Ovary (tissue), 10 donors: ENCODE measurements at regions of chr1 and their contacts with region 1.

Region 1: GRCh38 chr1:156860113-156860627 is 495 bp upstream of the NTRK1 start:
- DNase-seq: peak in 3 of 5 donors; percentile 32 to 64 (median 56)
- H3K4me3 ChIP-seq: peak overlapping the region; percentile 21
- H3K27ac ChIP-seq: no peak overlapping the region
- H3K4me1 ChIP-seq: peaks cover 2% of the 10 kb centered on the region
- H3K27me3 ChIP-seq: peaks cover 9% of the 10 kb centered on the region
- CTCF ChIP-seq: peak; percentile 36 to 51 (median 39)
- EP300 ChIP-seq: no peak
- POLR2A ChIP-seq: no peak

Region 2: GRCh38 chr1:156342166-156342955 is 517.8 kb before region 1 on chr1:
- intact Hi-C with region 1: loop called in 1 of 4 experiments (anchors 5 kb)
- DNase-seq: no peak
- H3K4me3 ChIP-seq: no peak overlapping the region
- H3K27ac ChIP-seq: no peak overlapping the region
- H3K4me1 ChIP-seq: no peaks in the 10 kb centered on the region
- H3K27me3 ChIP-seq: no peaks in the 10 kb centered on the region
- CTCF ChIP-seq: no peak
- EP300 ChIP-seq: no peak
- POLR2A ChIP-seq: no peak

Region 3: DNA sequence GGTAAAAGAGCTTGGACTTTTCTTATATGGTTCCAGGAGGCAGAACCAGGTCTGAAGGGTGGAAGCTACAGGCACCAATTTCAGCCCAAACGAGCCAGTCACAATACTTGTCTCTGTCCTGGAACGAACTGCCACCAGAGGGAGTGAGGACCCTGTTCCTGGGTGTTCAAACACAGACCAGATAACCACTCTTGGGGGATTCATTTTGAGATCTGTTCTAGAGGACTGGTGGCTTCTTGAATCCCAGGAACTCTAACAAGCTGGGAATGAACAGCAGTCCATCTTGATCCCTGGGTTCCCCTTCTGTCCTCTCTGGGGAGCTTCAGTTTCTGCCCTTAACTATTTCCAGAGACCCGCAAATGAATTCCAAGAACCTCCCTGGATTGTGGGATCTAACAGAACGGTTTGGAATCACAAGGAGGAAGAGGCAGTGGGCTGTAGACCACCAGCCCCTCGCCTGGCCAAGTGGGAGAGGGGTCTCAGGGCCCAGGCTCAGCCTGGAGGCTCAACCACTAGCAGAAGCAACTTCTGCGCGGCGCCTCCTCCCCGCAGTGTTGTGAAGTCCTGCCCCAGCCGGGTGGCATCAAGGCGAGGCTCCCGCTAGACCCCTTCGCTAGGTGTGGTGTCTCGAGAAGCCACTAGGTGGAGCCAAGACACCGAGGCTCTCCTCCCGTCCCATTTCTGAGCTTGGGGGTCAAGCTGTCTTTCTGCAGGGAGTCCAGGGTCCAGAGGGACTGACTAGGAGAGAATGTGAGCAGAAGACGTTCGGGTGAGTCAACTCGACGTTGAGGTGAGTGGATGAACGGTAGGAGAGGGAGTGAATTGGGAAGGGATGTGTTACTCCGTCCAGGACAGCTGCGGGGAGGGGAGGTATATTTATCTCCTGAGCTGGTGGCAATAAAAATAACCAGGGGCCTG is 170.9 kb before region 1 on chr1:
- intact Hi-C with region 1: loop called in 1 of 4 experiments (anchors 10 kb)
- DNase-seq: peak; percentile 72 to 84 (median 83)
- H3K4me3 ChIP-seq: no peak overlapping the region
- H3K27ac ChIP-seq: no peak overlapping the region
- H3K4me1 ChIP-seq: peaks cover 2% of the 10 kb centered on the region
- H3K27me3 ChIP-seq: no peaks in the 10 kb centered on the region
- CTCF ChIP-seq: peak; percentile 91 to 92 (median 92)
- EP300 ChIP-seq: no peak
- POLR2A ChIP-seq: no peak

Region 4: DNA sequence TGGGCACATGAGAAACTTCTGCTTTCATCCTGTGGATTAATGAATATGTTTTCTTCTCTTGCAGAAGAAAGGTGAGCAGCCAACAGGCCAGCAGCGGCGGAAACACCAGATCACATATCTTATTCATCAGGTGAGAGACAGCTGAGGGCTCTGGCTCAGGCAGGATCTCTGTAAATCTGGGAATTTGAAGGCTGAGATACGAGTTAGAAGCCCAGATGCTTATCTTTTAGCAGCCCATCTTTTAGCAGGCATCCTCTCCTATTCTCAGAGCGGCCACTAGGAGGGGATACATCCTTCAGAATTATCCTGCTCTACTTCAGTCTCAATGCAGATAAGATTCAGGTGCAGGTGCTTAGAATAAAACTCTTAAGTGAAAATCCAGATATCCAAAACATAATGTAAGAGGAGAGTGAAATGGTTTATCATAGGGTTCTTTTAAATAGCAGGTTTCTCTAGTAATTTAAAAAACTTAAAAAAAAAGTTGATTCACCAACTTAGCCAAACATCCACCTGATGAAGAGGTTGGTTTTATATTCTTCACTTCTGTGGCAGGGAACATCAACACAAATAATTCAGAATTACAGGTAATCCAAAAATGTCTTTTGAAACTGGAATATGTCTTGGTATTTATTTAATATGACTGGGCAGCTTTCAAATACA is 62.8 kb before region 1 on chr1:
- intact Hi-C with region 1: loop called in 1 of 4 experiments (anchors 10 kb)
- DNase-seq: no peak
- H3K4me3 ChIP-seq: no peak overlapping the region
- H3K27ac ChIP-seq: no peak overlapping the region
- H3K4me1 ChIP-seq: no peaks in the 10 kb centered on the region
- H3K27me3 ChIP-seq: no peaks in the 10 kb centered on the region
- CTCF ChIP-seq: peak in 1 of 3 donors; percentile 19
- EP300 ChIP-seq: no peak
- POLR2A ChIP-seq: no peak

Region 5: GRCh38 chr1:156833603-156834002 is 26.6 kb before region 1 on chr1:
- intact Hi-C with region 1: no loop called
- DNase-seq: no peak
- H3K4me3 ChIP-seq: no peak overlapping the region
- H3K27ac ChIP-seq: no peak overlapping the region
- H3K4me1 ChIP-seq: no peaks in the 10 kb centered on the region
- H3K27me3 ChIP-seq: no peaks in the 10 kb centered on the region
- CTCF ChIP-seq: no peak
- EP300 ChIP-seq: no peak
- POLR2A ChIP-seq: no peak